ENCODE measurements at regions of chr7 and their contacts with region 1.

Region 1: GRCh38 chr7:157046681-157047080 is 36.2 kb upstream of the MNX1 start:
- DNase-seq: no peak
- H3K4me3 ChIP-seq: no peak overlapping the region
- H3K27ac ChIP-seq: no peak overlapping the region
- H3K4me1 ChIP-seq: no peaks in the 10 kb centered on the region
- H3K27me3 ChIP-seq: peaks cover 14% of the 10 kb centered on the region
- CTCF ChIP-seq: no peak
- EP300 ChIP-seq: no peak
- POLR2A ChIP-seq: no peak

Region 2: GRCh38 chr7:156751319-156751718 is 295.4 kb before region 1 on chr7:
- in situ Hi-C with region 1: no loop called
- intact Hi-C with region 1: no loop called
- DNase-seq: no peak
- H3K4me3 ChIP-seq: no peak overlapping the region
- H3K27ac ChIP-seq: no peak overlapping the region
- H3K4me1 ChIP-seq: no peaks in the 10 kb centered on the region
- H3K27me3 ChIP-seq: no peaks in the 10 kb centered on the region
- CTCF ChIP-seq: no peak
- EP300 ChIP-seq: no peak
- POLR2A ChIP-seq: no peak

Region 3: GRCh38 chr7:157013602-157014549 is 32.8 kb before region 1 on chr7:
- in situ Hi-C with region 1: no loop called
- intact Hi-C with region 1: loop called (anchors 1 kb)
- DNase-seq: no peak
- H3K4me3 ChIP-seq: no peak overlapping the region
- H3K27ac ChIP-seq: peak overlapping the region in 1 of 4 donors; percentile 23
- H3K4me1 ChIP-seq: peaks cover 6 to 41% (median 24%) of the 10 kb centered on the region in 4 donors
- H3K27me3 ChIP-seq: peaks cover 95% of the 10 kb centered on the region
- CTCF ChIP-seq: no peak
- EP300 ChIP-seq: no peak
- POLR2A ChIP-seq: no peak

Measured in transverse colon (tissue), 4 donors.